SK-N-SH (cell line): ENCODE measurements at regions of chr22 and their contacts with region 1.

Region 1: GRCh38 chr22:25564320-25564978 is at the start of gene GRK3:
- DNase-seq: peak; percentile 95
- H3K4me3 ChIP-seq: peak within 1 kb of the TSS; percentile 75 to 88
- H3K27ac ChIP-seq: peak within 1 kb of the TSS in 1 of 2 experiments; percentile 96; a peak in 2 of 4 replicates
- H3K4me1 ChIP-seq: peaks cover 5 to 16% of the 10 kb centered on the region in 2 experiments; a peak in 2 of 4 replicates
- H3K27me3 ChIP-seq: peaks cover 6% of the 10 kb centered on the region; the same call in 1 of the 2 replicates
- CTCF ChIP-seq: no peak
- EP300 ChIP-seq: no peak
- RAD21 ChIP-seq: no peak
- polyA plus RNA-seq, gene GRK3: 1.3 and 1.9 TPM in 2 replicates

Region 2: GRCh38 chr22:25057013-25057881 is 507.2 kb before region 1 on chr22:
- CTCF ChIA-PET with region 1: no interaction called
- POLR2A ChIA-PET with region 1: no interaction called
- DNase-seq: peak; percentile 79
- H3K4me3 ChIP-seq: peak overlapping the region in 1 of 2 experiments; percentile 36; a peak in 1 of 4 replicates
- H3K27ac ChIP-seq: no peak overlapping the region
- H3K4me1 ChIP-seq: peaks cover 0 to 15% of the 10 kb centered on the region in 2 experiments; a peak in 1 of 4 replicates
- H3K27me3 ChIP-seq: no peaks in the 10 kb centered on the region
- CTCF ChIP-seq: peak; percentile 73
- EP300 ChIP-seq: no peak
- RAD21 ChIP-seq: peak; percentile 76

Region 3: GRCh38 chr22:25540166-25540907 is 24.1 kb before region 1 on chr22:
- CTCF ChIA-PET with region 1: interaction called, 10 read pairs
- POLR2A ChIA-PET with region 1: interaction called, 5 read pairs
- DNase-seq: no peak
- H3K4me3 ChIP-seq: no peak overlapping the region
- H3K27ac ChIP-seq: no peak overlapping the region
- H3K4me1 ChIP-seq: no peaks in the 10 kb centered on the region; a peak in 2 of 4 replicates
- H3K27me3 ChIP-seq: no peaks in the 10 kb centered on the region
- CTCF ChIP-seq: no peak
- EP300 ChIP-seq: no peak
- RAD21 ChIP-seq: no peak

Region 4: DNA sequence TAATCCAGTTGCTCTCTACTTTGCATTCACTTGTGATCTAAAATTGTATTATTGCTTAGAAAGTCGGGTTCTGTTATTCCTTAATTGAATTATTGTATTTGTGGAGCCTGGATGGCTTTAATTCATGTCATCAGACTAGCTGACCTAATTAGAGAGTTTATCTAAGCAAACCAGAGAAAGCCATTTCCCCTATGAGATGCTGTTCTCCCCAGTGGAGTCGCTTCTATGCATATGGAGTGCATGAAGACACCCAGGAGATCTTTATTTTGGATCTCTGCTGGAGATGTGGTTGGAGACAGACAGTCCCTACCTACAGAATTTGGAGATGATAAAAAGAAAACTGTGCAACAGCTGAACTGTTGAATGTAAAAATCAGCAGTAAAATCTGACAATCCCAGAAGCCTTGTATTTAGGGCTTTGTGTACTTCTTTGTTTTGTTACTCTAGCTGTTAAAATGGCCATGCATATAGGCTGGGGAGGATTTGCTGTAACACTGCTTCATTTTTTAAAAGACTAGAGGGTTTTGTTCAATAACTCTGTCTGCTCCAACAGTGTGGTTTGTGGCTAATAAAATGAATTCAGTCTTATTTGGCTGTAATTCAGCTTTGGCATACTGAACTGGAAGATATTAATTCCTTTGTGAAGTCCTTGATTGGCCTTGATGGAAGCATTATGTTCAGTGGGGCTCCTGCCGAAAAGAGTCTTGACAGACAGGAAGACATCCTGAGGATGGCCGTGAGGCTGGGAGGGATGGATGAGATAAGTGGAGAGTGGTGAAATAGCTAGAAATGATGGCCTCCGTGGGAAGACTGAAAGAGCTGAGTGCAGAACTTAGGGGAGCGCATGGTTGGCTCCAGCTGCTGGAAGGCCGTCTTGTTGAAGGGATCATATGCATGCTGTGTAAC is 132.6 kb after region 1 on chr22:
- CTCF ChIA-PET with region 1: interaction called, 17 read pairs
- POLR2A ChIA-PET with region 1: interaction called, 7 read pairs
- DNase-seq: peak; percentile 78
- H3K4me3 ChIP-seq: no peak overlapping the region; a peak in 1 of 4 replicates
- H3K27ac ChIP-seq: peak overlapping the region; percentile 43 to 100; a peak in 3 of 4 replicates
- H3K4me1 ChIP-seq: peaks cover 0 to 80% of the 10 kb centered on the region in 2 experiments; a peak in 2 of 4 replicates
- H3K27me3 ChIP-seq: no peaks in the 10 kb centered on the region
- CTCF ChIP-seq: no peak
- EP300 ChIP-seq: peak; percentile 57 to 99; a peak in 3 of 4 replicates
- RAD21 ChIP-seq: no peak; the same call in none of the 2 replicates